Panc1 (cell line): ENCODE measurements at regions of chr9 and their contacts with region 1.

Region 1: DNA sequence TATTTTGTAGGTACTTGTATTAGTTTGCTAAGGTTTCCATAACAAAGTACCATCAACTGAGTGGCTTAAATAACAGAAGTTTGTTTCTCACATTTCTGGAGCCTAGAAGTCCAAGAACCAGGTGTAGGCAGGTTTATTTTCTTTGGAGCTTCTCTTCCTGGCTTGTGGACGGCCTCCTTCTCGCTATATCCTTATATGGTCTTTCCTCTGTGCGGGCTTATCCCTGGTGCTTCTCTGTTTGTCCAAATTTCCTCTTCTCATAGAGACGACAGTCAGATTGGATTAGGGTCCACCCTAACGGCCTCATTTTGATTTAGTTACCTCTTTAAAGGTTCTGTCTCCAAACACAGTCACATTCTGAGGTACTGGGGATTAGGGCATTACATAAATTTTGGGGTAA is 88.3 kb downstream of the RMI1 start:
- DNase-seq: no peak
- ATAC-seq: no peak
- H3K4me3 ChIP-seq: no peak overlapping the region
- H3K27ac ChIP-seq: no peak overlapping the region
- H3K4me1 ChIP-seq: no peaks in the 10 kb centered on the region
- H3K27me3 ChIP-seq: no peaks in the 10 kb centered on the region
- CTCF ChIP-seq: no peak

Region 2: DNA sequence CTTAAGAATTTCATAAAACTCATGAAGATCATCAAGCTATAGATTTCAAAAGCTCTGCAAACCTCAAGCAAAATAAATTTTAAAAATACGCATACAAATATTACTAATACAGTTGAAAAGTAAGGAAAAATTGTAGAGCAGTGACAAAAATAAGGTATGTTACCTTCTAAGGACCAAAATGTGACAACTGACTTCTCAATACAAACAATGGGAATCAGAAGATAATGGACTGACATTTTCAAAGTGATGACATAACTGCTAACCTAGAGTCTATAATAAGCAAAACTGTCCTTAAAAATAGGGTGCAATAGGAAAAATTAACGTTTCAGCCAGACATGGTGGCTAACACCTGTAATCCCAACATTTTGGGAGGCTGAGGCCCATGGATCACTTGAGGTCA is 61.2 kb before region 1 on chr9:
- CTCF ChIA-PET with region 1: interaction called, 10 read pairs
- POLR2A ChIA-PET with region 1: no interaction called
- in situ Hi-C with region 1: no loop called
- intact Hi-C with region 1: no loop called
- DNase-seq: no peak
- ATAC-seq: no peak
- H3K4me3 ChIP-seq: no peak overlapping the region
- H3K27ac ChIP-seq: no peak overlapping the region
- H3K4me1 ChIP-seq: no peaks in the 10 kb centered on the region
- H3K27me3 ChIP-seq: no peaks in the 10 kb centered on the region
- CTCF ChIP-seq: no peak